ENCODE measurements at regions of chr22 and their contacts with region 1.

Region 1: DNA sequence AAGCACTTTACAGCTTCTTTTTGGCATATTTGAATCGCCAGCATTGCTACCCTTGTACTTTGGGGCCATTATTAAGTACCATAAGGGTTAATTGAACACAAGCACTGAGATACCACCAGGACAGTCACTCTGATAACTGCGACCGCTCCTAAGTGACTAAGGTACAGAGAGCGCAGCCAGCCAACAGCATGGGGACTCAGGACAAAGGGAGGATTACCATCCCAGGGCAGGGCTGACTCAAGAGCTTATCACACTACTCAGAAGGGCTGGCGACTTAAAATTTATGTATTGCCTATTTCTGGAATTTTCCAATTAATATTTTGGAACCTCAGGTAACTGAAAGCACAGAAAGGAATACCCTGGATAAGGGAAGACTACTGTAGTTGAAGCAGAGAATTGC is 479 bp downstream of the ZNF280A start:
- DNase-seq: no peak
- ATAC-seq: no peak

Region 2: DNA sequence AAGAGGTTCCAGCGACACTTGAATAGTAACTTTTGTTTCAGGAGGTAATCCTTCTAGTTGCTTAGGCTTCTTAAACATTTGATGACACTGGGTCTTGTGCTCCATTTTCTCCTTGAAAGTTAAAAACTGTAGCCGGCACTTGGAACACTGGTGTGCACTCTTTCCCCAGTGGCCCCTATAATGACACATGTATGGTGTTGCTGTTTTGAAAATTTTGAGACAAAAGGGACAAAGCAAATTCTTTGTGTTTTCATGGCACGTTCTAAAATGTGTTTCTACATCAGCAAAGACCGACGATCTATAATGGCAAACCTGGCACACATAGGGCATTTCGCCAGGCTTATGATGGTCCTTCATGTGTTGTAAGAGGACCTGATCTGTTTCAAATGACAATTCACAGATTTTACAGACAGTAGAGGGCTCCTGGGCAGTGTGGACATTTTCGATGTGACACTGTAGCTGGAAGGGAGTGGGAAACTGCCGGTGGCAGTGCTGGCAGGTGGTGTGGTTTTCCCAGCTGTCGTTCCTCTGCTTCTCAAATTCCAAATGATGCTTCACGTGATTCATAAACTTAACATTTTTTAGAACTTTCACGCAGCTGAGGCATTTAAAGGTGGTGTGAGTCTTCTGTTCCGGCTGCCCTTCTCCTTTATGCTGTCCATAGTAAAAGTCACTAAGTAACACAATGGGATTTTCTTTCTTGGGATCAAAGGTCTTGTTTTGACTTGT is 31.6 kb before region 1 on chr22:
- intact Hi-C with region 1: no loop called
- DNase-seq: no peak
- ATAC-seq: no peak

Region 3: DNA sequence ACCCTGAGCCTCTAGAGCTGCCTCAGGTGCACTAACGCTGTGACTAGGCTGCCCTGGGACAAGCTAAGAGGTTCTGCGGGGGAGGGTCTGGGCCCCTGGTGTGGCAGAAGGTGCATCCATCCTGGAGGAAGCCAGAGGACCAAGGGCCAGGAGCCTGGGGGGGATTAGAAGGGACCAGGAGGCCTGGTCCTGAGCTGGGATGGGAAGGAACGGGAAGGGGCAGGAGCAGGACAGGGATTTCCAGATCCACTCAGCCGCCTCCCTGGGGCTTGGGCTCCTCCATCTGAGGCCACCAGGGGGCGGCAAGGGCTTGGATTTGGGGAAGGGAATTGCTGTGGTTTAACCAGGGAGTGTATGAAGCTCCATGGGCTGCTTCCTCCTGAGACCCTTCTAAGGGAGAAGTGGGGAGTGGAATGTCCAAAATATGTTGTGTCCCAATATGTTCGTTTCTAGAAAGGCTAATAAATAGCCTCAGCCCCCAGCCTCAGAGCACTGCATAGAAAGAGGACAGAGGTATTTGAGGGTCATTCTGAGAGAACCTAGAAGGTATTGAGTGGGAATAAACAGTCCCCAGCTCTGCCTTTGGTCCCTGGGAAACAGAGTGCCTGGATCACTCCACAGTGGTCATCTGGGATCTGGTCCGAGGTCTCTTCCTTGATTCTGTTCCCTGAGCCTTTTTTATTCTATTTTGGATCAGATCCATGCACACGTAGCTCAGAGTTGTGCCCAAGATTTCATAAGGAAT is 56.8 kb after region 1 on chr22:
- intact Hi-C with region 1: loop called in 1 of 2 experiments (anchors 10 kb)
- DNase-seq: peak in 1 of 2 donors; percentile 60
- ATAC-seq: peak; percentile 64

Region 4: GRCh38 chr22:22655452-22656290 is 136.1 kb after region 1 on chr22:
- intact Hi-C with region 1: no loop called
- DNase-seq: no peak
- ATAC-seq: no peak